ENCODE measurements at regions of chr4 and their contacts with region 1.

Region 1: DNA sequence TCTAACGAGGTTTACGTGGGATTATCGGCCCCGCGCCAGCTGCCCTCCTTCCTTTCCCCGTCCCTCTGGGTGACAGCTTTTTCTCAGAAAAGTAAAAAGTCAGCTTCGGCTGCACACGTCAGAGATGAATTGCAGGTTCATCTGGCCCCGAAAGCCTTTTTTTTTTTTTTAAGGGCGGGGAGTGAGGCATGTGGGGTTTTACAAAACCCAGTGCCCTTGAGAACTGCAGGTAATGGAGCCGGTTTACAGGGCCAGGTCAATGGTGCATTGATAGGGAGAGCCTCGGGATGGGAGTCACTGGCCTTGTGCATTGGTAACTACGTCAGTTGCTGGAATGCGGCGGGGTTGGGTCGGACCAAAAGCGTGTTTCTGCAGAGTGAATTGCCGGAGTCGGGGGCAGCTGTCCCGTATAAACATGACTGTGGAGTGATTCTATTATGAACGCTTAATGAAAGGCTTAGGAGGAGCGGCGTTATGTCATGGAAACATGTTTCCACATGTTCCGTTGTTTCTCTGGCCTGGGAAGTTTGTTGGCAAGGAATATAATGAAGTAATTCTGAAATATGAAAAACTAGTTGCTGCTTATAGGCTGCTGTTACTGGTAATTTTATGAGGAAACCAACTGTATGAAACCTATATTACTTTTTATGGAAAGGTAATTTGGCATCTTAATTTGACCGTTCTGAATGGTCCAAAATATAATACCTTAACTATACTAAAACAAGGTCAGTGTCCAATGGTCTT is 1.1 kb downstream of the HSPA4L start:
- DNase-seq: no peak
- H3K4me3 ChIP-seq: no peak overlapping the region
- H3K27ac ChIP-seq: no peak overlapping the region
- H3K4me1 ChIP-seq: peaks cover 5% of the 10 kb centered on the region
- CTCF ChIP-seq: no peak

Region 2: DNA sequence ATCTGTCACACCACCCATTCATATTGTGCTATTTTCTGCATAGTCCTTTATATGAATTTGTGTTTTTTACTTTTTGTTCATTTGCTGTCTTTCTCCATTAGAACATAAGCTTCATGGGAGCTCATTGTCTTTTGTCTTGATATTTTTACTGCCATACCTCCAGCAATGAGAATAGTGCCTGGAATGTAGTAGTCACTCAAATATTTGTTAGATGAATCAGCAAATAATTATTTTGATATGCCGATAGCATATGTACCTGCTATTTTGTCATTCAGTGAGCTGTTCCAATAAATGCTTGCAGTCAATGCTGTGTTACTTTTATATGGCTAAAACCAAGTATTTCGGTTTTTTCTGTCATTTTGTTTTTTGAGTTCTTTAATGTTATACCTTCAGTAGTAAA is 96.5 kb before region 1 on chr4:
- CTCF ChIA-PET with region 1: no interaction called
- POLR2A ChIA-PET with region 1: no interaction called
- intact Hi-C with region 1: no loop called
- DNase-seq: no peak
- H3K4me3 ChIP-seq: no peak overlapping the region
- H3K27ac ChIP-seq: no peak overlapping the region
- H3K4me1 ChIP-seq: no peaks in the 10 kb centered on the region
- CTCF ChIP-seq: no peak

Region 3: GRCh38 chr4:127844601-127845116 is 61.5 kb after region 1 on chr4:
- CTCF ChIA-PET with region 1: no interaction called
- POLR2A ChIA-PET with region 1: interaction called, 10 read pairs
- intact Hi-C with region 1: no loop called
- DNase-seq: no peak
- H3K4me3 ChIP-seq: no peak overlapping the region
- H3K27ac ChIP-seq: no peak overlapping the region
- H3K4me1 ChIP-seq: no peaks in the 10 kb centered on the region
- CTCF ChIP-seq: no peak

Measured in OCI-LY7 (cell line).